Activated naive CD4-positive, alpha-beta T cell treated with anti-CD3 and anti-CD28 coated beads for 36 hours (primary cell): ENCODE measurements at regions of chr3 and their contacts with region 1.

Region 1: GRCh38 chr3:264394-265156 is 68.0 kb downstream of the CHL1 start:
- DNase-seq: no peak
- H3K4me3 Mint-ChIP-seq: no peak overlapping the region
- H3K27ac Mint-ChIP-seq: no peak overlapping the region
- H3K4me1 Mint-ChIP-seq: no peaks in the 10 kb centered on the region
- H3K27me3 Mint-ChIP-seq: peaks cover 13% of the 10 kb centered on the region

Region 2: DNA sequence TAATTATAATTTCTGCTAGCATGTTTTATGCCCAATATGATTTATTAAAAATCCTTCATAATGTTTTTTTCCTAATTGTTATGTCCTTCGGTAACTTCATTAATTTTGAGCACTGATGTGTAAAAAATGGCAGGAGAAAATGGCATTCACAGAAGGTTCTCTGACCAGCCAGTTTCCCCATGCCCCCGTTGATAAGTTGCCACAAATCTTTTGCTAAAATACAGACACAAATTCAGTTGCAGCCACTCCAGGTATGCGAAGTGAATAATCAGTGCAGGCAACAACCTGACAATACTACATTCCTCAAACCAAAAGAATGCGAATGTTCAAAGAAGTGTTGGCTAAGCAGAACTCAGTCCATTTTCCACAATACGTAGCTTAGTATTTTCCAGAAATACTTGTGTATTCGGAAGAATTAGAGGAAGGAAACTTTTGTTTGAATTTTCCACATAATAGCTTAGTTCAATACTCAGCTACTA is 35.4 kb before region 1 on chr3:
- CTCF ChIA-PET with region 1: no interaction called
- intact Hi-C with region 1: loop called (anchors 2 kb)
- DNase-seq: no peak
- H3K4me3 Mint-ChIP-seq: no peak overlapping the region
- H3K27ac Mint-ChIP-seq: no peak overlapping the region
- H3K4me1 Mint-ChIP-seq: no peaks in the 10 kb centered on the region
- H3K27me3 Mint-ChIP-seq: no peaks in the 10 kb centered on the region